SK-N-SH (cell line): ENCODE measurements at regions of chr14 and their contacts with region 1.

Region 1: GRCh38 chr14:24279301-24280186 is 8.1 kb upstream of the RABGGTA start:
- DNase-seq: peak; percentile 67
- H3K4me3 ChIP-seq: no peak overlapping the region
- H3K27ac ChIP-seq: no peak overlapping the region
- H3K4me1 ChIP-seq: peaks cover 0 to 10% of the 10 kb centered on the region in 2 experiments; a peak in 1 of 4 replicates
- H3K27me3 ChIP-seq: no peaks in the 10 kb centered on the region
- CTCF ChIP-seq: peak; percentile 47
- EP300 ChIP-seq: no peak; a peak in 1 of 4 replicates
- RAD21 ChIP-seq: peak; percentile 60

Region 2: DNA sequence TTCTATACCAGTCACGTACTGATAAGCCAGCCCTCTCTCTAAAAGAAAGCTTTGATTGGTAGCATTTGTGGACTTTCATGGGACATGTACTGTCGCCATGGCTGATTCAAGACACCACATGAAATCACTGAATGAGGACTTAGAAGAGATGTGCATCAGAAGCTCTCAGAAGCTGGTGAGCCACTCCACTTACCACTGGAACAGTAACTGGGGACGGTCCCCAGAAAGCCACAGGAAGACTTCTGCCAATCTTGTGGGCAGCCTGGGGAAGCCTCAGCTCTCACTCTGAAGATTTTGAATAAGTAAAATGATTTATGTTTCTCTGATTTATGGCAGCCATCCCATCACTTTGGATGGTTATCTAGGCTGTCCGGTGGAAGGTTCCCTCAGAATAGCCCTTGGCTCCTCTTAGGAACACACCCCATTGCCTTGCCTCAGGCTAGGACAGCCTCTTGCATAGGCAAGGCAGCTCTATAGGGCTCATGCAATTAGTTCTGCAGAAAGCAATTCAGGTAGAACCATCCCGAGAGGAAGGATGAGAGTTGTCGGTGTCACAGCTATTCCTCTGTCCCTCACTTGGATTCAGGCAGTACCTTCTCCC is 10.2 kb after region 1 on chr14:
- CTCF ChIA-PET with region 1: interaction called, 87 read pairs
- POLR2A ChIA-PET with region 1: no interaction called
- DNase-seq: no peak
- H3K4me3 ChIP-seq: no peak overlapping the region
- H3K27ac ChIP-seq: no peak overlapping the region
- H3K4me1 ChIP-seq: no peaks in the 10 kb centered on the region
- H3K27me3 ChIP-seq: no peaks in the 10 kb centered on the region
- CTCF ChIP-seq: no peak
- EP300 ChIP-seq: no peak
- RAD21 ChIP-seq: no peak

Region 3: DNA sequence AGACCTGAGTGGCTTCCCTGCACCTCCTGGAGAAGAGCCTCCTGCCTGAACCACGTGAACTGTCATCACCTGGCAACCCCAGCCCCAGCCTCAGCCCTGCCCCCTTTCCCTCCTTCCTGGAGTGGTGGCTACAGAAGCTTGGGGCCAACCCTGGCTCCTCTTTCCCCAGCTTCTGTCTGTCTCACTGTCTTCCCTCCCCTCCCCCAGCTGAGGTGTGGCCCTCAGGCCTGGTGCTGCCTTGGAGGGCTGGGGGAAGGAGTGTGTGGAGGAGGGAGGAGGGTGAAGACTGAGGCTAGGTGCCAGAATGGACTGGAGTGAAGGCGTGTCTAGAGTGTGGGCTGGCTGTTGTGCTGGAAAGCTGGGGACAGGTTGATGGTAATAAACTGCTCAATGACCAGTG is 98.1 kb after region 1 on chr14:
- CTCF ChIA-PET with region 1: no interaction called
- POLR2A ChIA-PET with region 1: no interaction called
- DNase-seq: no peak
- H3K4me3 ChIP-seq: no peak overlapping the region
- H3K27ac ChIP-seq: no peak overlapping the region
- H3K4me1 ChIP-seq: peaks cover 0 to 17% of the 10 kb centered on the region in 2 experiments; a peak in 1 of 4 replicates
- H3K27me3 ChIP-seq: no peaks in the 10 kb centered on the region
- CTCF ChIP-seq: no peak
- EP300 ChIP-seq: no peak
- RAD21 ChIP-seq: no peak